ENCODE measurements at regions of chr1 and their contacts with region 1.

Region 1: GRCh38 chr1:71521655-71522264 is 440.9 kb upstream of the ZRANB2 start:
- DNase-seq: peak; percentile 33
- ATAC-seq: peak; percentile 56

Region 2: DNA sequence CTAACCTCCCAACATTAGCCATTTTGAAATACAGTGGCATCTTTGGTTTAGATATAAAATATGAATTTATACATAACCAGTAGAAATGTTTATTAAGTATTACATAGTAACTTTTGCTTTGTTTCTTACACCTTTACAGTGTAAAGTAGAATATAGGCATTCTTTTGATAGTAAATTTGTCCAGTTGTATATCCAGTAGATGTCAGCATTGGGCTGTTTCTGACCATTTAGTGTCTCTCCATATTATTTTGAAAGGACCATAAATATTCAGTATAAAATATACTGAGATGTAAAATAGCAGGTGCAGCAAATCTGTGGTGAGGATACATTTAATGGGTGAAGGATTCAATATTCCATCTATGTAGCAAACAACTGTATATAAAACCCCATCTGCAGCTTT is 325.1 kb before region 1 on chr1:
- intact Hi-C with region 1: loop called (anchors 10 kb)
- DNase-seq: no peak
- ATAC-seq: no peak

Region 3: GRCh38 chr1:71656902-71657301 is 135.1 kb after region 1 on chr1:
- intact Hi-C with region 1: no loop called
- DNase-seq: no peak
- ATAC-seq: no peak

Region 4: GRCh38 chr1:71667216-71667615 is 145.5 kb after region 1 on chr1:
- intact Hi-C with region 1: no loop called
- DNase-seq: no peak
- ATAC-seq: peak; percentile 75